Right ventricle myocardium inferior (tissue), 1 donor: ENCODE measurements at regions of chr1 and their contacts with region 1.

Region 1: GRCh38 chr1:20666804-20667203 is 5.6 kb upstream of the DDOST start:
- DNase-seq: no peak
- ATAC-seq: no peak

Region 2: DNA sequence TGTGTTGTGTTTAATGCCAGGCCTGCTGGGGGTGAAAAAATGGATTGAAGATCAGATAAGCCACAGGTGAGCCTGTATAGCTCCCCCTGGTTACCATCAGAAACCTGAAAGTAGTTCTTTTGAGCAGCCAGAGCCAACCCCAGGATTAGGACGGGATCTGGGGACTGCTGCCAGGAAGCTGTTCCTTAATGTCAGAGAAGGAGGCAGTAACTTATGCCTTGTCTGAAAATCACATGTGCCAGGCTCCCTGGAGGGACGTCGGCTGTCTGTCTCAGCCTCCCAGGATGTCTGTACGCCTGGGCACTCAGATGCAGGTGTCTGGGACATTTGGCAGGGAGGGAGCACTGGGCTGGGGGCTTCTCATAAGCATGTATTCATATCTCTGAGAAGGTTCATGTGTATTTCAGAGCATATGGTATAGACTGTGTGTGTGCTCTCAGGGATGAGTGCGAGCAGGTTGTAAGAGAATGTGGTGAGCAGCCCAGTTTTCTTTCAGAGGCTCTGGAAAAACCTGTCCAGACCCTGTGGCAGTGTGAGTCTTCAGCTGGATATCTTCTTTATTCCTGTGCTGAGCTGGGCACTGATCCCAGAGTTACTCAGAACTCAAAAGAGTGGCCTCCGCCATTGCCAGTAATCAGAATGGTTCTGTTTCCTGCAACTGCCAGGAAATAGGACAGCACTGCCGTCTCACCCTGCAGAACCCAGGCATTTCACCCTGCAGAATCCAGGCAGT is 111.6 kb before region 1 on chr1:
- intact Hi-C with region 1: no loop called
- DNase-seq: no peak
- ATAC-seq: peak; percentile 21

Region 3: DNA sequence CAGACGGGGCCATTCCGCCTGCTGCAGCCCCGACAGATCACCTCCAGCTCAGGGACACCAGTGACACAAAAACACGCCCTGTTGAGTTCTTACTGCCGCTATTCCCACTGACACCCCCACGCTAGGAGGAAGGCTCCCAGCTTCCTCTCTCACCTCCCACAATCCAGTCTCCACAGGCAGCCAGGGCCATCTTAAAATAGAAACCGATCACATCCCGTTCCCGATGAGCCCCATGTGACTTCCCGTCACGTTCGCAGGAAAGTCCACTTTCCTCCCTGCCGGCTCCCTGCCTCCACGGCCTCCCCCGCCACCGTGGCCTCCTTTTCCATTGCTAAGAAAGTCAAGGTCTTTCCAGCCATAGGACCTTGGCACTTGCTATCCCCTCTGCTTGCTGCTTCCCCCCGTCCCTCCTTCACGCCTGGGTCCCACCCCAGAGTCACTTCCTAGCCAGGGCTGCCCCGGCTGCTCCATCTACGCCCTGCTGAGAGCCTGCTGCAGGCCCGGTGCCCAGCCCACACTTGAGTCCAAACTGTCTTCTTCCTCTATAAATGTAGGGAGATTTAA is 18.4 kb after region 1 on chr1:
- intact Hi-C with region 1: loop called (anchors 2 kb)
- DNase-seq: peak; percentile 65
- ATAC-seq: peak; percentile 50